ENCODE measurements at regions of chr5 and their contacts with region 1.

Region 1: GRCh38 chr5:119290161-119290569 is 65.7 kb upstream of the TNFAIP8 start:
- DNase-seq: peak in 1 of 10 donors; percentile 24
- ATAC-seq: peak; percentile 43 to 51
- H3K4me3 Mint-ChIP-seq: peak overlapping the region; percentile 53 to 100 (median 82)
- H3K27ac Mint-ChIP-seq: peak overlapping the region; percentile 91 to 98 (median 96)
- H3K4me1 Mint-ChIP-seq: peaks cover 39 to 89% (median 83%) of the 10 kb centered on the region in 4 donors
- H3K27me3 Mint-ChIP-seq: no peaks in the 10 kb centered on the region

Region 2: DNA sequence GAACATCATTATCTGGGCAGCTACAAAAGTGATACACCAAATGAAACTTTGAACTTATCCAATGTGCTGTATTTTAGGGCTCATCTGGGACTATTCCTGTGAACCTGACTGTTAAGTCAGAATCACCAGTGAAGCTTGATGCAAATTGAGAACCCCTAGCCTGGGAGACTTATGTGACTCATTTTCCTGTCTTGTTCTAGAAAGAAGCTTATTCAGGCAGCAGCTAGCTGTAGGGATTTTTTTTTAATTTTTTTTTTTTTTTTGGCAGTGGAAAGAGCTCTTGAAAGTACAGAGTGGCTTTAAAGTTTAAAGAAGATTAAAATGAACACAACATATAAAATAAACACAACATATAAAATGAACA is 15.4 kb before region 1 on chr5:
- POLR2A ChIA-PET with region 1: interaction called, 40 read pairs
- DNase-seq: no peak
- ATAC-seq: peak in 1 of 2 donors; percentile 43
- H3K4me3 Mint-ChIP-seq: peak overlapping the region; percentile 96 to 100 (median 100)
- H3K27ac Mint-ChIP-seq: peak overlapping the region; percentile 93 to 98 (median 96)
- H3K4me1 Mint-ChIP-seq: peaks cover 42 to 98% (median 88%) of the 10 kb centered on the region in 4 donors
- H3K27me3 Mint-ChIP-seq: peaks cover 0 to 2% (median 0%) of the 10 kb centered on the region in 5 donors

Region 3: GRCh38 chr5:119302916-119303897 is 13.0 kb after region 1 on chr5:
- POLR2A ChIA-PET with region 1: interaction called, 16 read pairs
- DNase-seq: peak in 1 of 10 donors; percentile 34
- ATAC-seq: peak; percentile 52 to 71
- H3K4me3 Mint-ChIP-seq: peak overlapping the region; percentile 31 to 89 (median 72)
- H3K27ac Mint-ChIP-seq: peak overlapping the region; percentile 85 to 100 (median 97)
- H3K4me1 Mint-ChIP-seq: peaks cover 44 to 95% (median 84%) of the 10 kb centered on the region in 4 donors
- H3K27me3 Mint-ChIP-seq: no peaks in the 10 kb centered on the region